Activated CD4-positive, alpha-beta T cell treated with anti-CD3 and anti-CD28 coated beads for 36 hours (primary cell): ENCODE measurements at regions of chr18 and their contacts with region 1.

Region 1: GRCh38 chr18:7890075-7890474 is 323.0 kb downstream of the PTPRM start:
- DNase-seq: no peak
- ATAC-seq: no peak
- H3K4me3 Mint-ChIP-seq: no peak overlapping the region
- H3K27ac Mint-ChIP-seq: no peak overlapping the region
- H3K4me1 Mint-ChIP-seq: peaks cover 4% of the 10 kb centered on the region
- H3K27me3 Mint-ChIP-seq: no peaks in the 10 kb centered on the region

Region 2: GRCh38 chr18:7722950-7723349 is 167.1 kb before region 1 on chr18:
- CTCF ChIA-PET with region 1: no interaction called
- POLR2A ChIA-PET with region 1: no interaction called
- intact Hi-C with region 1: no loop called
- DNase-seq: no peak
- ATAC-seq: no peak
- H3K4me3 Mint-ChIP-seq: no peak overlapping the region
- H3K27ac Mint-ChIP-seq: no peak overlapping the region
- H3K4me1 Mint-ChIP-seq: no peaks in the 10 kb centered on the region
- H3K27me3 Mint-ChIP-seq: no peaks in the 10 kb centered on the region

Region 3: GRCh38 chr18:7840411-7840810 is 49.7 kb before region 1 on chr18:
- CTCF ChIA-PET with region 1: no interaction called
- POLR2A ChIA-PET with region 1: no interaction called
- intact Hi-C with region 1: loop called in 1 of 2 experiments (anchors 5 kb)
- DNase-seq: no peak
- ATAC-seq: no peak
- H3K4me3 Mint-ChIP-seq: no peak overlapping the region
- H3K27ac Mint-ChIP-seq: no peak overlapping the region
- H3K4me1 Mint-ChIP-seq: peaks cover 7% of the 10 kb centered on the region
- H3K27me3 Mint-ChIP-seq: no peaks in the 10 kb centered on the region

Region 4: GRCh38 chr18:7902399-7902839 is 12.3 kb after region 1 on chr18:
- CTCF ChIA-PET with region 1: no interaction called
- POLR2A ChIA-PET with region 1: no interaction called
- intact Hi-C with region 1: no loop called
- DNase-seq: no peak
- ATAC-seq: no peak
- H3K4me3 Mint-ChIP-seq: no peak overlapping the region
- H3K27ac Mint-ChIP-seq: no peak overlapping the region
- H3K4me1 Mint-ChIP-seq: no peaks in the 10 kb centered on the region
- H3K27me3 Mint-ChIP-seq: no peaks in the 10 kb centered on the region

Region 5: GRCh38 chr18:7950380-7951143 is 60.5 kb after region 1 on chr18:
- CTCF ChIA-PET with region 1: no interaction called
- POLR2A ChIA-PET with region 1: no interaction called
- intact Hi-C with region 1: loop called in 1 of 2 experiments (anchors 5 kb)
- DNase-seq: peak; percentile 55
- ATAC-seq: peak; percentile 84
- H3K4me3 Mint-ChIP-seq: no peak overlapping the region
- H3K27ac Mint-ChIP-seq: peak overlapping the region; percentile 56
- H3K4me1 Mint-ChIP-seq: peaks cover 45% of the 10 kb centered on the region
- H3K27me3 Mint-ChIP-seq: no peaks in the 10 kb centered on the region

Region 6: DNA sequence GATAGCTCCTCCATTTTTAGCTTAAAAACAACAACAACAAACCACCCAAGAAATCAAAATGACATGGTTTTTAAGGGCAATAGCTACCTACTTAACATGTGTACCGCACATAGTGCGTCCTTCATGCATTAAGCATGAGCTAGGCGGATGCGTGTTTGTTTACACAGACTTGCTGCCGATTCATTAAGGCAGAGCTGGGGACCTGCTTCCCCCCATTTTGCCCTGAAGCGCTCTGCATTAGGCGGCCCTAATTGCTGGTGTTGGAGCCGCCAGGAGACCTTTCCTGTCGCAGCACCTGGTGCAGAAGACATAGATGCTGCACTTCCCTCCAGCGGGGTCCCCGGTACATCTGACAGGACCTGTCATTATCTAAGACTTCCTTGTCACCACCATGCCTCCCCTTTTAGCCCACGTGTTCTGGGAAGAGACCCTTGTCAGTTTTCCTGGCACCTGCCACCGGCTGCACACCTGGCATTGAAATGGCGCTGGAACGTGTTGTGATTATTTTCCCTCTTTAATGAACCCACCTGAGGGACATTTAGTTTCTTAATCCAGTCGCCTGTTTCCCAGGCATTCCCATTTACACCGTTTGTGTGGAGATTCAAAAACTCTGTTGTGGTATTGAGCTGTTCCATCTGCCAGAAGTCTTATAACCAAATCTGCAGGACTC is 458.1 kb after region 1 on chr18:
- CTCF ChIA-PET with region 1: no interaction called
- POLR2A ChIA-PET with region 1: no interaction called
- intact Hi-C with region 1: no loop called
- DNase-seq: no peak
- ATAC-seq: no peak
- H3K4me3 Mint-ChIP-seq: no peak overlapping the region
- H3K27ac Mint-ChIP-seq: no peak overlapping the region
- H3K4me1 Mint-ChIP-seq: no peaks in the 10 kb centered on the region
- H3K27me3 Mint-ChIP-seq: no peaks in the 10 kb centered on the region